Activated naive CD4-positive, alpha-beta T cell treated with anti-CD3 and anti-CD28 coated beads for 36 hours (primary cell): ENCODE measurements at regions of chr11 and their contacts with region 1.

Region 1: DNA sequence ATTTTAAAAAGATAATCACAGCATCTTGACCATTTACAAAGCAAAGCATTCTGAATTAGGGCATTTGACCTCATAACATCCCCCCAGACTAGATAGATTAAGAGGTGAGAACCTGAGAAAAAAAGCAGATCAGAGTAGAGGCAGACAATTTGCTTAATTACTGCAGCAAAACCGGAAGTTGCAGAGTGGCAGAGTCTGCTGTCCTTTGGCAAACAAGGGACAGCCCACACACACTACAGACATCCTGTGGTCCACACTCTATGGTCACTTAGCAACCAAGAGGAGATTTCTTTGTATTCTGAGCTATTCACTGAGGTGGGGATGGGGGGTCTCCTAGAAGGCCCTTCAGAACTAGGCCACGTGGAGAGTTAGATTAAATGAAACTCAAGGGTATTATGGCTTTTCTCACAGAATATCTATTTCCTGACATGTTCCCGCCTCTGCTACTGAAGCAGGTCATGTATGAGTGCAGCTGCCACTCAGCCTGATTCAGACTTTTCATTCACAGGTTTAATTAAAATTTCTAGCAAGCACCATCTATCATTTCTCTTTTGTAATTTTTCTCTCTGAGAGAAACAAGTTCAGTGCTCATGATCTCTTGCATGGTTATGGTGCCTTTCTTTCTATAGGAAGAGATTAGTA is 48.5 kb downstream of the SVIP start:
- DNase-seq: no peak
- H3K4me3 Mint-ChIP-seq: no peak overlapping the region
- H3K27ac Mint-ChIP-seq: no peak overlapping the region
- H3K4me1 Mint-ChIP-seq: peaks cover 5% of the 10 kb centered on the region
- H3K27me3 Mint-ChIP-seq: no peaks in the 10 kb centered on the region

Region 2: DNA sequence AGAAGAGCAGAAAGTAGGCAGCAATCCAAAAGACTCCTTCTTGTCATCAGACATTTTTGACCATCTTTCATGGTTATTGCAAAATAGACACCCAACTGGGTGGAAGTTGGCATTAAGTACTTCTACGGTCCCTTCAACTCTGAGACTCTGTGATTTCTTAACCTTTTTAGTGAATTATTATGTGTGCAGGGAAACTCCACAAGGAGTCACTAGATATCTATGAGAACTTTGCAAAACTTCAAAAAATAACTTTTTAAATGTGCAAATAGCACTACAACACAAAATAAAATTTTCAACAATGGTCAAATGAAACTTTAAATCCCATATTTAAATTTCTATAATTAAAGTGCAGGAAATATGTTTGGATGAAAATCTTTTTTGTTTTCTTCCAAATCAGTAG is 354.2 kb before region 1 on chr11:
- CTCF ChIA-PET with region 1: no interaction called
- intact Hi-C with region 1: loop called (anchors 5 kb)
- DNase-seq: no peak
- H3K4me3 Mint-ChIP-seq: no peak overlapping the region
- H3K27ac Mint-ChIP-seq: no peak overlapping the region
- H3K4me1 Mint-ChIP-seq: peaks cover 2% of the 10 kb centered on the region
- H3K27me3 Mint-ChIP-seq: peaks cover 22% of the 10 kb centered on the region

Region 3: GRCh38 chr11:22807855-22808570 is 26.9 kb after region 1 on chr11:
- CTCF ChIA-PET with region 1: no interaction called
- intact Hi-C with region 1: no loop called
- DNase-seq: no peak
- H3K4me3 Mint-ChIP-seq: no peak overlapping the region
- H3K27ac Mint-ChIP-seq: no peak overlapping the region
- H3K4me1 Mint-ChIP-seq: no peaks in the 10 kb centered on the region
- H3K27me3 Mint-ChIP-seq: no peaks in the 10 kb centered on the region